ENCODE measurements at regions of chr3 and their contacts with region 1.

Region 1: DNA sequence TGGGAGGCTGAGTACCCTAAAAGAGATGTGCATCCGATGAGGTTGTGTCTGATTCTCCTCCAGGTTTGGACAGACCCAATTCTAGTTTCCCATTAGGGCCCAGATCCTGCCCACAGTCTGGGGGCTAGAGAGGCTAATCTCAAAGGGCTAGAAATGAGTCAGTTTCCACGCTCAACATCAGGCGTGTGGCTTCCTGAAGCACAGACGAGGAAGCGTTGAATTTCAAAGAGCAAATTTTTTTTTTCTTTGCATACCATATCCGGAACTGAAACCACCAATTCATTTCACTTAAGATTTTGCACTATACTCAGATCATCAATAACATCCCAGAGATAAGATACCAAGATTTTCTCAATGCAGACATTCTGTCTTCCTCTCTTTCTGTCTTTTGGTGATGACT is 173.8 kb upstream of the BCL6 start:
- DNase-seq: peak; percentile 75
- H3K4me3 Mint-ChIP-seq: peak overlapping the region; percentile 51
- H3K27ac Mint-ChIP-seq: peak overlapping the region; percentile 94
- H3K4me1 Mint-ChIP-seq: peaks cover 75% of the 10 kb centered on the region
- H3K27me3 Mint-ChIP-seq: peaks cover 3% of the 10 kb centered on the region

Region 2: DNA sequence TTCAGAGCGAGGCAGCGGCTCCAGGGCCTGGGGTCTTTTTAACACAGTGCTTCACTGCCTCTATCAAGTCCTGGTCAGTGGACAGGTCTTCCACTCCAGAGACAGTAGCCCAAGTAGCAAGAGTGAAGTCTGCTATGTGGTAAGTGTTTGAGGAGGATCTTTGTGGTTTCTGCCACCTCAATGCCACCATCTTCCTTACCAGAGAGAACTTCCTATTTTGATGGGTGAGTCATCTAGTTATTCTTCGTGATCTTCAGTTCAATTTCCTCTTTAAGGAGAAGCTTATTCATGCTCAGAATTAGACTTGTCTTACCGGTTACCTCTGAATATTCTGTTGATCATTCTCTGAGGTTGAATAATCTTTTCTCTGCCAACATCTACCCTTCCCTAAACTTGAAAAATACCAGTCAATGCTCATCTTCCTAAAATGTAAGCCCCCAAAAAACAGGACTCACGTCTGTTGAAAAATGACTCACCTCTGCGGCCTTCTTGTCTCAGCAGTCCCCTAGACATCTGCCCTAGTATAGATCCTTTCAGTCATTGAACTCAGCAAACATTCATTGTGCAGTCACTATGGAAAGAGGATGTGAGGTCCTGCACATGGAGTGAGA is 141.6 kb before region 1 on chr3:
- CTCF ChIA-PET with region 1: no interaction called
- POLR2A ChIA-PET with region 1: interaction called, 3 read pairs
- intact Hi-C with region 1: loop called (anchors 1 kb)
- DNase-seq: peak; percentile 72
- H3K4me3 Mint-ChIP-seq: peak overlapping the region; percentile 21
- H3K27ac Mint-ChIP-seq: peak overlapping the region; percentile 91
- H3K4me1 Mint-ChIP-seq: peaks cover 50% of the 10 kb centered on the region
- H3K27me3 Mint-ChIP-seq: no peaks in the 10 kb centered on the region

Region 3: DNA sequence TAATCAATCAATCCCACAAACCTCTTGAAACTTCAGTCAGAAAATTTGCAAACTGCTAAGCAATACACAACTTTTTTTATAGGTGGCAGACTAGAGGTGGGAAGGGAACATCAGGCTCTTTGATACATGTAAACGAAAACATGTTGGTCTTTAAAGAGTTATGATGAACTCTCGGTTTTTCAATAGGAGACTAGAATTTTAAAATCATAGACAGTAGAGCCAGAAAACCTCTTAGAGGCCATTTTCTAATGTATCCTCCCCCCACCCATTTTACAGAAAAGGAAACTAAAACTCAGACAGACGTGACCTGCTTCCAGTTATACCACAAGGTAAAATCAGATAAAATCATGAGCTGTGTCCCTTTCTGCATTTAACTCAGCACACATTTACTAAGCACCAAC is 55.8 kb after region 1 on chr3:
- CTCF ChIA-PET with region 1: interaction called, 4 read pairs
- POLR2A ChIA-PET with region 1: interaction called, 10 read pairs
- intact Hi-C with region 1: loop called (anchors 1 kb)
- DNase-seq: no peak
- H3K4me3 Mint-ChIP-seq: peak overlapping the region; percentile 62
- H3K27ac Mint-ChIP-seq: peak overlapping the region; percentile 92
- H3K4me1 Mint-ChIP-seq: peaks cover 63% of the 10 kb centered on the region
- H3K27me3 Mint-ChIP-seq: no peaks in the 10 kb centered on the region

Region 4: GRCh38 chr3:188170461-188171459 is 251.7 kb after region 1 on chr3:
- CTCF ChIA-PET with region 1: no interaction called
- POLR2A ChIA-PET with region 1: no interaction called
- intact Hi-C with region 1: loop called (anchors 2 kb)
- DNase-seq: peak; percentile 82
- H3K4me3 Mint-ChIP-seq: peak overlapping the region; percentile 28
- H3K27ac Mint-ChIP-seq: peak overlapping the region; percentile 89
- H3K4me1 Mint-ChIP-seq: peaks cover 58% of the 10 kb centered on the region
- H3K27me3 Mint-ChIP-seq: no peaks in the 10 kb centered on the region

Region 5: DNA sequence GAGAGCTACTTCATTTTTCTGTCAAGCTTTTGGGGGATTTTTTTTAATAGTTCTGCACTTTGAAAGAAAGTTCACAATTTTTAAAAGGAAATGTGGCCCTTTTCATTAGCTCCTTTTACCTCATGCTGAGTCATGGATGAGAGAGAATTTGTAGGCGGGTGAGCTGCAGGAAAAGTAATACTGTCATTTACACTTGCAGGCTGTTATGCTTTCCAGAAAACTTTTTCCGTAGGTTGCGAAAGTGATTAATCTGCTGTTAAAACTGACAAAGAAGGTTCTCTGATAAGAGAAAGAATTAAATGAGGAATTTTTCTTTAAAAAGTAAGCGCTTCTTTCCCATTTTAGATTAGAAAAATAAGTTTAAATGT is 665.1 kb after region 1 on chr3:
- CTCF ChIA-PET with region 1: no interaction called
- POLR2A ChIA-PET with region 1: no interaction called
- intact Hi-C with region 1: loop called (anchors 10 kb)
- DNase-seq: peak; percentile 31
- H3K4me3 Mint-ChIP-seq: no peak overlapping the region
- H3K27ac Mint-ChIP-seq: no peak overlapping the region
- H3K4me1 Mint-ChIP-seq: peaks cover 13% of the 10 kb centered on the region
- H3K27me3 Mint-ChIP-seq: no peaks in the 10 kb centered on the region

Region 6: GRCh38 chr3:188954590-188955208 is 1035.7 kb after region 1 on chr3:
- CTCF ChIA-PET with region 1: interaction called, 4 read pairs
- POLR2A ChIA-PET with region 1: no interaction called
- intact Hi-C with region 1: loop called (anchors 5 kb)
- DNase-seq: peak; percentile 85
- H3K4me3 Mint-ChIP-seq: no peak overlapping the region
- H3K27ac Mint-ChIP-seq: no peak overlapping the region
- H3K4me1 Mint-ChIP-seq: peaks cover 28% of the 10 kb centered on the region
- H3K27me3 Mint-ChIP-seq: peaks cover 4% of the 10 kb centered on the region

Measured in activated CD4-positive, alpha-beta memory T cell treated with anti-CD3 and anti-CD28 coated beads for 36 hours (primary cell).